Common myeloid progenitor, CD34-positive (primary cell): ENCODE measurements at regions of chr1 and their contacts with region 1.

Region 1: GRCh38 chr1:192573499-192573898 is 2.1 kb upstream of the RGS1 start:
- DNase-seq: peak in 1 of 3 donors; percentile 33
- H3K4me3 ChIP-seq: no peak overlapping the region
- H3K27ac ChIP-seq: no peak overlapping the region
- H3K4me1 ChIP-seq: peaks cover 4 to 13% (median 11%) of the 10 kb centered on the region in 4 experiments
- H3K27me3 ChIP-seq: no peaks in the 10 kb centered on the region

Region 2: GRCh38 chr1:192561301-192561700 is 12.2 kb before region 1 on chr1:
- CTCF ChIA-PET with region 1: interaction called, 14 read pairs
- POLR2A ChIA-PET with region 1: no interaction called
- DNase-seq: no peak
- H3K4me3 ChIP-seq: no peak overlapping the region
- H3K27ac ChIP-seq: no peak overlapping the region
- H3K4me1 ChIP-seq: peaks cover 0 to 7% (median 0%) of the 10 kb centered on the region in 4 experiments
- H3K27me3 ChIP-seq: no peaks in the 10 kb centered on the region